HCT116 (cell line): ENCODE measurements at regions of chr9 and their contacts with region 1.

Region 1: DNA sequence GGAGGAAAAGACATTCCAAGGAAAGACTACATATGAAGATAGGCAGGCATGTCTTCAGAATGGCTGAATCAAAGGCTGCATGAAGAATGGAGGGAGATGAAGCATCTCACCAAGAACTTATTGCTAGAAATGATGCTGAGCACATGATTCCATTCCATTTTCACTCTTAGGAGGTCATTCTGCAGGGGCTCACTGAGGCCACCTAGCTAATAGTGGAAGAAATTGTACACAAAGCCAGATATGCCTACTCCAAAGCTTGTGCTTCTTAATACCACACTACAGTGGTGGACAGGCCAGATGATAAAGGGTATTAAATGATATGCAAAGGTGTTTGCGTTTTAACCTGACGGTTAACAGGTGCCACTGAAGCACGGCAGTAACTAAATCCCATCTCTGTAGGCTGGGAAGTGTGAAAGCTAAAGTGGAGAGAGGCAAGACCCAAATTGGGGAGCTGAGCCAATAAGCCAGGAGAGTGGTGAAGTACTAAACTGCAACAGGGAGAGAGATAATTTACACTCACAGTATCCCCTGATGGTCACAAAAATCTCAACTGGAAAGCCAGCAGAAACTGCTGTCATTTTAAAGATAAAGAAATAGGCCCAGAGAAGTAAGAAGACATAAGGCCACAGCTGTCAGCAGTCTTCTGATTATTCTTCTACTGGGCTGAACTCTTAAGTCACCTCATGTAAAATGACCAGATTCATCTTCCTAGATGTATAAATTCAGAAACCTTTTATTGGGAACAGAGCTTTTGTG is 14.6 kb downstream of the NDUFA8 start:
- DNase-seq: no peak
- ATAC-seq: peak; percentile 85
- H3K4me3 ChIP-seq: no peak overlapping the region
- H3K27ac ChIP-seq: no peak overlapping the region
- H3K4me1 ChIP-seq: no peaks in the 10 kb centered on the region
- H3K27me3 ChIP-seq: no peaks in the 10 kb centered on the region
- CTCF ChIP-seq: peak in 2 of 3 experiments; percentile 48 to 57; a peak in 4 of 6 replicates
- POLR2A ChIP-seq: no peak
- RAD21 ChIP-seq: peak; percentile 24; the same call in 1 of the 2 replicates

Region 2: GRCh38 chr9:122159026-122159924 is 14.3 kb after region 1 on chr9 and contains the starts of genes MORN5 and NDUFA8:
- CTCF ChIA-PET with region 1: interaction called, 11 read pairs
- POLR2A ChIA-PET with region 1: no interaction called
- RAD21 ChIA-PET with region 1: no interaction called
- intact Hi-C with region 1: no loop called
- DNase-seq: peak; percentile 94
- ATAC-seq: peak; percentile 93
- H3K4me3 ChIP-seq: peak within 1 kb of the TSS; percentile 75 to 92
- H3K27ac ChIP-seq: peak within 1 kb of the TSS; percentile 49
- H3K4me1 ChIP-seq: peaks cover 4 to 13% of the 10 kb centered on the region in 2 experiments
- H3K27me3 ChIP-seq: no peaks in the 10 kb centered on the region
- CTCF ChIP-seq: peak in 1 of 3 experiments; percentile 9; a peak in 1 of 6 replicates
- POLR2A ChIP-seq: peak; percentile 74
- RAD21 ChIP-seq: no peak
- total RNA-seq, gene MORN5: not detected
- total RNA-seq, gene NDUFA8: 84.5 TPM